CD14-positive monocyte (primary cell): ENCODE measurements at regions of chr11 and their contacts with region 1.

Region 1: GRCh38 chr11:18243783-18244362 is 4.6 kb downstream of the SAA2 start:
- DNase-seq: peak; percentile 63 to 74 (median 72)
- H3K4me3 ChIP-seq: no peak overlapping the region
- H3K4me3 Mint-ChIP-seq: no peak overlapping the region
- H3K27ac ChIP-seq: no peak overlapping the region
- H3K27ac Mint-ChIP-seq: no peak overlapping the region
- H3K4me1 ChIP-seq: no peaks in the 10 kb centered on the region
- H3K4me1 Mint-ChIP-seq: peaks cover 11% of the 10 kb centered on the region
- H3K27me3 ChIP-seq: peaks cover 6 to 18% of the 10 kb centered on the region in 2 donors
- H3K27me3 Mint-ChIP-seq: peaks cover 2 to 10% (median 7%) of the 10 kb centered on the region in 3 donors
- CTCF ChIP-seq: peak; percentile 91

Region 2: GRCh38 chr11:18280438-18281045 is 36.7 kb after region 1 on chr11:
- intact Hi-C with region 1: loop called in 1 of 2 experiments (anchors 5 kb)
- DNase-seq: peak; percentile 15 to 35 (median 20)
- H3K4me3 ChIP-seq: peak overlapping the region in 2 of 3 experiments; percentile 33 to 66
- H3K4me3 Mint-ChIP-seq: peak overlapping the region; percentile 39 to 57
- H3K27ac ChIP-seq: peak overlapping the region; percentile 50 to 89
- H3K27ac Mint-ChIP-seq: peak overlapping the region; percentile 77 to 92 (median 87)
- H3K4me1 ChIP-seq: peaks cover 51 to 64% of the 10 kb centered on the region in 2 donors
- H3K4me1 Mint-ChIP-seq: peaks cover 47% of the 10 kb centered on the region
- H3K27me3 ChIP-seq: no peaks in the 10 kb centered on the region
- H3K27me3 Mint-ChIP-seq: no peaks in the 10 kb centered on the region
- CTCF ChIP-seq: no peak

Region 3: GRCh38 chr11:18321980-18322711 is 78.3 kb after region 1 on chr11 and contains the starts of genes GTF2H1 and HPS5:
- intact Hi-C with region 1: loop called in 1 of 2 experiments (anchors 10 kb)
- DNase-seq: peak; percentile 98 to 99 (median 99)
- H3K4me3 ChIP-seq: peak within 1 kb of the TSS; percentile 58 to 82 (median 82)
- H3K4me3 Mint-ChIP-seq: peak within 1 kb of the TSS; percentile 95 to 97
- H3K27ac ChIP-seq: peak within 1 kb of the TSS; percentile 93 to 94
- H3K27ac Mint-ChIP-seq: peak within 1 kb of the TSS; percentile 99 to 100 (median 100)
- H3K4me1 ChIP-seq: peaks cover 35 to 50% of the 10 kb centered on the region in 2 donors
- H3K4me1 Mint-ChIP-seq: peaks cover 60% of the 10 kb centered on the region
- H3K27me3 ChIP-seq: no peaks in the 10 kb centered on the region
- H3K27me3 Mint-ChIP-seq: no peaks in the 10 kb centered on the region
- CTCF ChIP-seq: no peak
- polyA plus RNA-seq, gene GTF2H1: 23.0 to 26.6 (median 26.2) TPM
- polyA plus RNA-seq, gene HPS5: 11.4 to 17.7 (median 12.9) TPM

Region 4: DNA sequence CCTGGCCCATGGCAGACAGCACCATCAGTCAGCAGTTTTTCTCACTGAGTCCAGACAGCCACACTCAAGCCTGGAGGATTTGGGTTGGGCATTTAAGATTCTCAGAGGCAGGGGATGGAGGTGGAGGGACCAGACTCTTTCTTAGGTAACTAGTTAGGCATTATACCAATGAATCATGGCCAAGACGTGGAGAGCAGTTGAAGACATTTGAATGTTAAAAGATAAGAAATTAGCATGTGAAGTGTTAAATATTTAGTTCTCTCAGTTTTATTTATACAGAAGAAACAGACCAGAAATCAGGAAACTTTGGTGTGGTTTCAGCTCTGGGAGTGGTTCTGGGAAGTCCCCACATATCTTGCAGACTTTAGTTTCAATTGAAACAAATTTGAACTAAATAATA is 88.4 kb after region 1 on chr11:
- intact Hi-C with region 1: loop called (anchors 10 kb)
- DNase-seq: no peak
- H3K4me3 ChIP-seq: no peak overlapping the region
- H3K4me3 Mint-ChIP-seq: no peak overlapping the region
- H3K27ac ChIP-seq: no peak overlapping the region
- H3K27ac Mint-ChIP-seq: peak overlapping the region in 4 of 7 donors; percentile 32 to 80 (median 53)
- H3K4me1 ChIP-seq: no peaks in the 10 kb centered on the region
- H3K4me1 Mint-ChIP-seq: peaks cover 8% of the 10 kb centered on the region
- H3K27me3 ChIP-seq: no peaks in the 10 kb centered on the region
- H3K27me3 Mint-ChIP-seq: no peaks in the 10 kb centered on the region
- CTCF ChIP-seq: no peak